GM12878 (cell line): ENCODE measurements at regions of chr15 and their contacts with region 1.

Region 1: GRCh38 chr15:56207092-56207491 is 36.6 kb downstream of the RFX7 start:
- DNase-seq: peak; percentile 38
- ATAC-seq: peak; percentile 91
- H3K4me3 ChIP-seq: no peak overlapping the region
- H3K27ac ChIP-seq: peak overlapping the region; percentile 66; the same call in 1 of the 2 replicates
- H3K4me1 ChIP-seq: peaks cover 28% of the 10 kb centered on the region
- H3K27me3 ChIP-seq: no peaks in the 10 kb centered on the region
- CTCF ChIP-seq: no peak
- EP300 ChIP-seq: no peak
- POLR2A ChIP-seq: no peak
- RAD21 ChIP-seq: no peak

Region 2: DNA sequence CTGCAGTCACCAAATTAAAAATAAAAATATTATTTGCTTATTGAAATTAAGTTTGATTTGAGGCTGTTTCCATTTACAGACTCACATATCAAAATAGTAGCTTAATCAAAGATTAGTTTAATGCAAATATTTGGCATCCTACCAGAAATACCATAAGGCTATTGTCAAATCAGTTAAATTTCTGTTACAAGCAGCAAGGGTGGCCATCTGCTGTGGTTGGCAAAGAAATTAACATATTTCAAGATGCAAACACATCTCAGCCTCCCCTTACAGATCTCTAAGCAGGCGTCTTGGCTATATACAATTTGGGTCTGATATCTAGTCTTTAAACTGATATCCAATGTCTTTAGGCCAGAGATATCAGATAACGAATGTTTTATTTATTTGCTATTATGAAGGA is 130.5 kb before region 1 on chr15:
- CTCF ChIA-PET with region 1: no interaction called
- POLR2A ChIA-PET with region 1: no interaction called
- RAD21 ChIA-PET with region 1: no interaction called
- SMC1A ChIA-PET with region 1: no interaction called
- in situ Hi-C with region 1: no loop called
- intact Hi-C with region 1: no loop called
- DNase-seq: no peak
- ATAC-seq: no peak
- H3K4me3 ChIP-seq: no peak overlapping the region
- H3K27ac ChIP-seq: no peak overlapping the region
- H3K4me1 ChIP-seq: no peaks in the 10 kb centered on the region
- H3K27me3 ChIP-seq: no peaks in the 10 kb centered on the region
- CTCF ChIP-seq: no peak
- EP300 ChIP-seq: no peak
- POLR2A ChIP-seq: no peak
- RAD21 ChIP-seq: no peak

Region 3: GRCh38 chr15:56236197-56236596 is 29.1 kb after region 1 on chr15:
- CTCF ChIA-PET with region 1: no interaction called
- POLR2A ChIA-PET with region 1: no interaction called
- RAD21 ChIA-PET with region 1: no interaction called
- SMC1A ChIA-PET with region 1: interaction called, 5 read pairs
- in situ Hi-C with region 1: no loop called
- intact Hi-C with region 1: loop called (anchors 2 kb)
- DNase-seq: no peak
- ATAC-seq: peak; percentile 48
- H3K4me3 ChIP-seq: no peak overlapping the region
- H3K27ac ChIP-seq: no peak overlapping the region
- H3K4me1 ChIP-seq: no peaks in the 10 kb centered on the region
- H3K27me3 ChIP-seq: no peaks in the 10 kb centered on the region
- CTCF ChIP-seq: no peak
- EP300 ChIP-seq: no peak
- POLR2A ChIP-seq: no peak
- RAD21 ChIP-seq: no peak

Region 4: GRCh38 chr15:56254265-56254664 is 47.2 kb after region 1 on chr15:
- CTCF ChIA-PET with region 1: no interaction called
- POLR2A ChIA-PET with region 1: no interaction called
- RAD21 ChIA-PET with region 1: no interaction called
- SMC1A ChIA-PET with region 1: no interaction called
- in situ Hi-C with region 1: no loop called
- intact Hi-C with region 1: no loop called
- DNase-seq: no peak
- ATAC-seq: no peak
- H3K4me3 ChIP-seq: no peak overlapping the region
- H3K27ac ChIP-seq: no peak overlapping the region
- H3K4me1 ChIP-seq: no peaks in the 10 kb centered on the region
- H3K27me3 ChIP-seq: no peaks in the 10 kb centered on the region
- CTCF ChIP-seq: no peak
- EP300 ChIP-seq: no peak
- POLR2A ChIP-seq: no peak
- RAD21 ChIP-seq: no peak

Region 5: GRCh38 chr15:56285981-56286612 is 79.0 kb after region 1 on chr15:
- CTCF ChIA-PET with region 1: no interaction called
- POLR2A ChIA-PET with region 1: no interaction called
- RAD21 ChIA-PET with region 1: no interaction called
- SMC1A ChIA-PET with region 1: no interaction called
- in situ Hi-C with region 1: no loop called
- intact Hi-C with region 1: no loop called
- DNase-seq: no peak
- ATAC-seq: peak; percentile 58; the same call in 2 of the 3 replicates
- H3K4me3 ChIP-seq: no peak overlapping the region
- H3K27ac ChIP-seq: no peak overlapping the region
- H3K4me1 ChIP-seq: no peaks in the 10 kb centered on the region
- H3K27me3 ChIP-seq: no peaks in the 10 kb centered on the region
- CTCF ChIP-seq: peak; percentile 4 to 45 (median 25); a peak in 3 of 6 replicates
- EP300 ChIP-seq: no peak
- POLR2A ChIP-seq: no peak
- RAD21 ChIP-seq: no peak

Region 6: GRCh38 chr15:56353119-56353518 is 146.0 kb after region 1 on chr15:
- CTCF ChIA-PET with region 1: no interaction called
- POLR2A ChIA-PET with region 1: no interaction called
- RAD21 ChIA-PET with region 1: no interaction called
- SMC1A ChIA-PET with region 1: no interaction called
- in situ Hi-C with region 1: no loop called
- intact Hi-C with region 1: no loop called
- DNase-seq: no peak
- ATAC-seq: no peak
- H3K4me3 ChIP-seq: no peak overlapping the region
- H3K27ac ChIP-seq: no peak overlapping the region
- H3K4me1 ChIP-seq: 0 out of 2 replicates have a peak, but pooled peaks cover 3% of the 10 kb centered on the region
- H3K27me3 ChIP-seq: no peaks in the 10 kb centered on the region
- CTCF ChIP-seq: no peak
- EP300 ChIP-seq: no peak
- POLR2A ChIP-seq: no peak
- RAD21 ChIP-seq: no peak